MCF 10A (cell line): ENCODE measurements at regions of chr2 and their contacts with region 1.

Region 1: DNA sequence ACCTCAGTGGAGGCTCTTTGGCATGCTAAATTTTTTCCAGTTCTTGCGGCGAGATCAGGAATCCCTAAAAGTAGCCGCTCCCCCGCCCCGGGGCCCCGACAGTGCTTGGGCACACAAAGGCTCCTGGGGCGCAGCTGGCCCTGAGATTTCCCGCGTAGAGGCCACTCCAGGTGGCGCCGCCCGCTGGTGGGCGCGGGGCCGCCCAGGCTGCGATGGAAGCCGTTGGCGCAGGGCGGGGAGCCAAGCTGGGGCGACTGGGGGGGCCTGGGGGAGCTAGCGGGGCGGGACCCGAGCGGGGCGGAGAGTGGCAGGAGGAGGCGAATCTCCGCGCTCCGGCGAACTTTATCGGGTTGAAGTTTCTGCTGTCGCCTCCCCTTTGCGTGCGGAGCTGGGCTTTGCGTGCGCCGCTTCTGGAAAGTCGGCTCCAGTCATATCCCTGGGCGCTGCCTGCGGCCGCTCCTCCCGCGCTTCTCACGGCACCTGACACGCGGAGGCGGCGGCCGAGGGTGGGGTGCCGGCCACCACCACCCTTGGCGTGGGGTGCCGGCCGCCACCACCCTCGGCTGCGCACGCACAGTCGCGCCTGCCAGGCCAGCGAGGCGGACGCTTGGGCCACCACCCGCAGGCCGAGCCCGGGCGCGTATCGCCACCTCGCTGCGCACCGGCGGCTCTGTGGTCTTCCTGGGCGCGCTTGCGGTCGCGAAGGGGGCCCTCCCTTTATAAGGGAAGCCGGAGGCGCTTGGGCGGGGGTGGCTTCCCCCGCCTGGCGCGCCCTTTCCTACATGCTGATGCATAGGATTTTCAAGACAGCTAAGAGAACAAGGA is 867 bp upstream of the CYP1B1 start:
- DNase-seq: peak; percentile 95
- H3K4me3 Mint-ChIP-seq: peak overlapping the region; percentile 78
- H3K27ac Mint-ChIP-seq: peak overlapping the region; percentile 75
- H3K4me1 Mint-ChIP-seq: peaks cover 20% of the 10 kb centered on the region
- H3K27me3 Mint-ChIP-seq: no peaks in the 10 kb centered on the region
- CTCF ChIP-seq: no peak

Region 2: DNA sequence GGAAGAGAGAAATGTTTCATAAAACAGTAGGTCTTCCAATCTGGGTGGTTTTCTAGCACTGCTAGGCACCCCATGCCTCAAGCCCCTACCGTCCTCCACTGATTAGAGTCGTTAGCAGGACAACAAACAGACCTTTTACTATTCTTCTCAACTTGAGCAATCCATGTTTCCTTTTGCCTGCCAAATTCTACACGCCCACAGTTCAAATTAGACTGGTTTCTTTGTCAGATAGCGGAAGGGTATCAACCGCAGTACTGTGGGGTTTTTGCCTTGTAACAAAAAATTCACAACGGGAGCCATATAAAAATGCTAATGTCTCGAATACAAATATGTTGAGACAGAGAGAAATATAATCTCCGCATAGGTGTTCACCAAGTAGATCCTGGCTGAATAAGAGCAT is 1320.4 kb before region 1 on chr2:
- CTCF ChIA-PET with region 1: no interaction called
- POLR2A ChIA-PET with region 1: no interaction called
- intact Hi-C with region 1: no loop called
- DNase-seq: no peak
- H3K4me3 Mint-ChIP-seq: no peak overlapping the region
- H3K27ac Mint-ChIP-seq: no peak overlapping the region
- H3K4me1 Mint-ChIP-seq: no peaks in the 10 kb centered on the region
- H3K27me3 Mint-ChIP-seq: no peaks in the 10 kb centered on the region
- CTCF ChIP-seq: no peak

Region 3: GRCh38 chr2:37982147-37982582 is 94.7 kb before region 1 on chr2:
- CTCF ChIA-PET with region 1: interaction called, 7 read pairs
- POLR2A ChIA-PET with region 1: interaction called, 8 read pairs
- intact Hi-C with region 1: loop called (anchors 1 kb)
- DNase-seq: peak; percentile 79
- H3K4me3 Mint-ChIP-seq: no peak overlapping the region
- H3K27ac Mint-ChIP-seq: no peak overlapping the region
- H3K4me1 Mint-ChIP-seq: peaks cover 14% of the 10 kb centered on the region
- H3K27me3 Mint-ChIP-seq: no peaks in the 10 kb centered on the region
- CTCF ChIP-seq: peak; percentile 88

Region 4: GRCh38 chr2:38106405-38107094 is 29.7 kb after region 1 on chr2:
- CTCF ChIA-PET with region 1: interaction called, 6 read pairs
- POLR2A ChIA-PET with region 1: interaction called, 29 read pairs
- intact Hi-C with region 1: no loop called
- DNase-seq: no peak
- H3K4me3 Mint-ChIP-seq: no peak overlapping the region
- H3K27ac Mint-ChIP-seq: peak overlapping the region; percentile 80
- H3K4me1 Mint-ChIP-seq: peaks cover 26% of the 10 kb centered on the region
- H3K27me3 Mint-ChIP-seq: no peaks in the 10 kb centered on the region
- CTCF ChIP-seq: no peak

Region 5: DNA sequence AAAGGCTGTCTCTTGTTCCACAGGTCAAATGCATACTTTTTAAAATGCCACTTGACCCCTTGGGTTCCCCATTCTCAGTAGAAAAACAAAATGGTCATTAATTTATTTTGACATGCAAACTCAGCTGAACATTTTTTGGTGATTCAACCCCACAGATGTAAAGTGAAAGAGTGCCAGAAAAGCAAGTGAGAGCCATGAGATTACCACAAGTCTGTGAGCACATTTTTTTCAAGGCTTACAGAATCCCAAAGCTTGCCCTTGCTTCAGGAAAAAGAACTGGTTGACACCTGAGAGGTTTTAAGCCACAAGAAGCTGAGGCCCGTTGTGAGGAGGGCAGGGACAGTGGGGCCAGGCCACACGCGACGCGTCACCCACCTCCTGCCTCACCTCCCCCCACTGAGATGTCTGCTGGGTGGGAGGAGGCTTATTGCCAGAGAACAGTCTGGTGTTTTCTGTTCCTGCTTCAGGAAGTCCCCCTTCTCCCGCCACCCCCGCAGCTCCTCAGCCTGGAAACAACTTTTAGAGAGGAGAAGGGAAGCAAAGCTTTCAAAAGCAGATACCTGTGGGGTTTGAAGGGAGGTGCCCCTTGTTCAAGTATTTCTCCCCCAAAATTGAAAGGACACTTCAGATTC is 69.6 kb after region 1 on chr2:
- CTCF ChIA-PET with region 1: interaction called, 6 read pairs
- POLR2A ChIA-PET with region 1: interaction called, 15 read pairs
- intact Hi-C with region 1: loop called (anchors 2 kb)
- DNase-seq: peak; percentile 86
- H3K4me3 Mint-ChIP-seq: peak overlapping the region; percentile 20
- H3K27ac Mint-ChIP-seq: no peak overlapping the region
- H3K4me1 Mint-ChIP-seq: peaks cover 5% of the 10 kb centered on the region
- H3K27me3 Mint-ChIP-seq: no peaks in the 10 kb centered on the region
- CTCF ChIP-seq: no peak

Region 6: GRCh38 chr2:38228753-38229152 is 151.9 kb after region 1 on chr2:
- CTCF ChIA-PET with region 1: no interaction called
- POLR2A ChIA-PET with region 1: no interaction called
- intact Hi-C with region 1: no loop called
- DNase-seq: no peak
- H3K4me3 Mint-ChIP-seq: no peak overlapping the region
- H3K27ac Mint-ChIP-seq: no peak overlapping the region
- H3K4me1 Mint-ChIP-seq: peaks cover 42% of the 10 kb centered on the region
- H3K27me3 Mint-ChIP-seq: no peaks in the 10 kb centered on the region
- CTCF ChIP-seq: no peak

Region 7: DNA sequence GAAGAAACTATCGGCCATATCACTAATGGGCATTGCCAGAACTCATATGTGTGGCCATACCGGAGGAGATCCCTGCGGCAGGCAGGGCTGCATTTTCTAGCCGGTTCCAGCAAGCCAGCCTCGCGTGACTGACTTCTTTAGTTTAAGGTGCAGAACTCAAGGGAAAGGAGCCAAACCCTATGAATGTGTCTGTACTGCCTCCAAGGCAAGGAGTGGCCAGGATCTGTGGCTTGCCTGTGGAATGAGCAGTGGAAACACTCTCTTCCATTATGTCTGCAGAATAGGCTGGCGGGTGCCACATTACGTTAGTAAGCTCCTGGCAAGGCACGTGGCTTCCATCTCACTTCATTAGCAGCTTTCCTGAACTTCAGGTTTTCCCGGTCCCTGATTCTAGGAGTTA is 162.6 kb after region 1 on chr2:
- CTCF ChIA-PET with region 1: interaction called, 5 read pairs
- POLR2A ChIA-PET with region 1: interaction called, 21 read pairs
- intact Hi-C with region 1: loop called (anchors 1 kb)
- DNase-seq: peak; percentile 95
- H3K4me3 Mint-ChIP-seq: peak overlapping the region; percentile 72
- H3K27ac Mint-ChIP-seq: peak overlapping the region; percentile 83
- H3K4me1 Mint-ChIP-seq: peaks cover 39% of the 10 kb centered on the region
- H3K27me3 Mint-ChIP-seq: no peaks in the 10 kb centered on the region
- CTCF ChIP-seq: no peak

Region 8: GRCh38 chr2:38274286-38275276 is 197.8 kb after region 1 on chr2:
- CTCF ChIA-PET with region 1: interaction called, 20 read pairs
- POLR2A ChIA-PET with region 1: interaction called, 9 read pairs
- intact Hi-C with region 1: loop called (anchors 1 kb)
- DNase-seq: peak; percentile 84
- H3K4me3 Mint-ChIP-seq: no peak overlapping the region
- H3K27ac Mint-ChIP-seq: no peak overlapping the region
- H3K4me1 Mint-ChIP-seq: peaks cover 8% of the 10 kb centered on the region
- H3K27me3 Mint-ChIP-seq: no peaks in the 10 kb centered on the region
- CTCF ChIP-seq: peak; percentile 78